Posterior vena cava (tissue), 2 donors: ENCODE measurements at regions of chr15 and their contacts with region 1.

Region 1: DNA sequence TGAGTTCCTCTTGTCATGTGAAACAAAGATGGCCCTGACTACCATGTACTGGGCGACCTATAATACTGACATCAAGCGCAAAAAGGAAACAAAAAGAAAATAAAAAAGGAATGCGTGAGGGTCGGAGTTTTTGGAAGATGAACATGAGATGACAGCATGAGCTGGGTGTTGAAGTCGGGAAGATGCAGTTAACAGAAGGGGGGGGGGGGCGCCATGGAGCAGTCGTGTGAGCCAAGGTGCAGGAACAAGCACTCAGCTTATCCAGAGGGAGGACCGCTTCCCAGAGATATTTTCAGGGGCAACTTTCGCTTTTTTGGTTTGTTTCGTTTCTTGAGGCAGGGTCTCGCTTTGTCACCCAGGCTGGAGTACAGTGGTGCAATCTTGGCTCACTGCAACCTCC is 110.2 kb downstream of the RORA start:
- DNase-seq: no peak

Region 2: DNA sequence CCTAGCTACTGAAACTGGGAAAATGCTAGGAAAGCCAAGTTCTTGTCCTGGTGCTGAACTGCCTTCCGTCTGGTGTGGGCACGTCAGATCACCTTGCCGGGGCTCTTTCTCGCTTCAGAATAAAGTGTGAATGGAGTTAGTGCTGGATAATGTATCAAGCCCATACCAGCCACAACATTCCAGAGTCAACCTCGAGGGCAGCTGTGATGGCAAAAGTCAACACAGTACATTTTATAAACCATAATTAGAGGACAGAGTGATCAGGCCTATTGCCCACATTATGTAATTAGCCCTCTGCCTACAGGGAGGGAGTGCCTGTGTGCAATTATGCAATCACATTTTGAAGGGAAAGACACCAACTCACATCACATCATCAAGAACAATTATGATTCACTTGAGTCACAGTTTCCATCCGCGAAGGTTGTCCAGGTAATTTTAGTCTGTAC is 55.0 kb before region 1 on chr15:
- intact Hi-C with region 1: loop called in 1 of 2 experiments (anchors 2 kb)
- DNase-seq: no peak